IMR-90 (cell line): ENCODE measurements at regions of chr7 and their contacts with region 1.

Region 1: GRCh38 chr7:18345641-18346234 is 149.8 kb upstream of the HDAC9 start:
- DNase-seq: peak; percentile 46
- ATAC-seq: peak; percentile 49; the same call in 1 of the 2 replicates
- H3K4me3 ChIP-seq: no peak overlapping the region
- H3K27ac ChIP-seq: no peak overlapping the region
- H3K4me1 ChIP-seq: no peaks in the 10 kb centered on the region
- H3K27me3 ChIP-seq: no peaks in the 10 kb centered on the region
- CTCF ChIP-seq: peak; percentile 78
- POLR2A ChIP-seq: no peak
- RAD21 ChIP-seq: peak; percentile 73

Region 2: GRCh38 chr7:16891338-16891737 is 1454.4 kb before region 1 on chr7:
- CTCF ChIA-PET with region 1: no interaction called
- POLR2A ChIA-PET with region 1: no interaction called
- dilution Hi-C with region 1: no loop called
- in situ Hi-C with region 1: no loop called
- intact Hi-C with region 1: loop called (anchors 5 kb)
- DNase-seq: peak; percentile 72
- ATAC-seq: peak; percentile 92
- H3K4me3 ChIP-seq: no peak overlapping the region
- H3K27ac ChIP-seq: no peak overlapping the region
- H3K4me1 ChIP-seq: no peaks in the 10 kb centered on the region
- H3K27me3 ChIP-seq: no peaks in the 10 kb centered on the region
- CTCF ChIP-seq: peak; percentile 80
- POLR2A ChIP-seq: no peak
- RAD21 ChIP-seq: peak; percentile 95

Region 3: DNA sequence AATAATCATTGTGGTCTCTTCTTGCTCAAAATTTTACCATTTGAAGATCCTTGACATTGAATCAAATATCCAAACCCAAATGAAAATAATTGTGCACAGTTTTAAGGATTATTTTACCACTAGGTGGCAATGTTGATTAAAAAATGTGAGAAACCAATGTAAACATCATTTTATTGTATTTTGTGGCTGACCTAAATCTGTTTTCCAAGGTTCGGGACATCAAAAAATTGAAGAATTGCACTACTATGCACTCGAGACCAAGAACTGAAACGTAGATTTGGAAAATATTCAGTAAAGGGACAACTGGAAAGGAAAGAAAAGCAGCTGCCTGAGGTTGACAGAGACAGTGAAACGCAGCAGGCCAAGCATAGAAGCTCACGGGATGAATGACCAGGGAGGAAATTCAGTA is 664.8 kb before region 1 on chr7:
- CTCF ChIA-PET with region 1: interaction called, 3 read pairs
- POLR2A ChIA-PET with region 1: no interaction called
- dilution Hi-C with region 1: no loop called
- in situ Hi-C with region 1: no loop called
- intact Hi-C with region 1: loop called (anchors 1 kb)
- DNase-seq: peak; percentile 49
- ATAC-seq: no peak
- H3K4me3 ChIP-seq: no peak overlapping the region
- H3K27ac ChIP-seq: peak overlapping the region; percentile 55; the same call in 1 of the 2 replicates
- H3K4me1 ChIP-seq: peaks cover 15% of the 10 kb centered on the region
- H3K27me3 ChIP-seq: no peaks in the 10 kb centered on the region
- CTCF ChIP-seq: peak; percentile 66
- POLR2A ChIP-seq: no peak
- RAD21 ChIP-seq: peak; percentile 67

Region 4: GRCh38 chr7:17706734-17707133 is 639.0 kb before region 1 on chr7:
- CTCF ChIA-PET with region 1: interaction called, 8 read pairs
- POLR2A ChIA-PET with region 1: no interaction called
- dilution Hi-C with region 1: no loop called
- in situ Hi-C with region 1: no loop called
- intact Hi-C with region 1: loop called (anchors 1 kb)
- DNase-seq: peak; percentile 72
- ATAC-seq: peak; percentile 82
- H3K4me3 ChIP-seq: no peak overlapping the region
- H3K27ac ChIP-seq: no peak overlapping the region
- H3K4me1 ChIP-seq: no peaks in the 10 kb centered on the region
- H3K27me3 ChIP-seq: peaks cover 5% of the 10 kb centered on the region
- CTCF ChIP-seq: peak; percentile 77
- POLR2A ChIP-seq: no peak
- RAD21 ChIP-seq: peak; percentile 80